Left ventricle myocardium superior (tissue), 1 donor: ENCODE measurements at regions of chr2 and their contacts with region 1.

Region 1: DNA sequence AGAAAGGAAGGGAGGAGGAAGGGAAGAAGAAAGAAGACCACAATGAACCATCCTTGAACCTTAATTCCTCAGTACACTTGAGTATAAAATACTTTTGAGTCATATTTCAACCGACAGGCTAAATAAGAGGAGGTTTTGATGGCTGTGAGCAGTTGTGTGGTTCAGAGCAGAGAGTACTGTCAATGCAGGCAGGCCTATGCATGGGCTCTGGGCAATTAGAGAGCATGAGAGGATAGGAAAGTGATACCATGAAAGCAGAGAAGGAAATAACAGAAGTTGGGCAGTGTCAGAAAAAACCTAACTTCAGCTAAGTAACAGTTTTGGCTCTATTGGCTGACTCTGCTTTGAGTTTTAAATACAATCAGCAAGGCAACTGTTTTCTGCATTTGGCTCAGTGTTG is 123.6 kb upstream of the STK17B start:
- DNase-seq: no peak
- ATAC-seq: no peak

Region 2: GRCh38 chr2:196453613-196454047 is 158.6 kb after region 1 on chr2:
- intact Hi-C with region 1: loop called (anchors 5 kb)
- DNase-seq: no peak
- ATAC-seq: peak; percentile 71